ENCODE measurements at regions of chr22 and their contacts with region 1.

Region 1: DNA sequence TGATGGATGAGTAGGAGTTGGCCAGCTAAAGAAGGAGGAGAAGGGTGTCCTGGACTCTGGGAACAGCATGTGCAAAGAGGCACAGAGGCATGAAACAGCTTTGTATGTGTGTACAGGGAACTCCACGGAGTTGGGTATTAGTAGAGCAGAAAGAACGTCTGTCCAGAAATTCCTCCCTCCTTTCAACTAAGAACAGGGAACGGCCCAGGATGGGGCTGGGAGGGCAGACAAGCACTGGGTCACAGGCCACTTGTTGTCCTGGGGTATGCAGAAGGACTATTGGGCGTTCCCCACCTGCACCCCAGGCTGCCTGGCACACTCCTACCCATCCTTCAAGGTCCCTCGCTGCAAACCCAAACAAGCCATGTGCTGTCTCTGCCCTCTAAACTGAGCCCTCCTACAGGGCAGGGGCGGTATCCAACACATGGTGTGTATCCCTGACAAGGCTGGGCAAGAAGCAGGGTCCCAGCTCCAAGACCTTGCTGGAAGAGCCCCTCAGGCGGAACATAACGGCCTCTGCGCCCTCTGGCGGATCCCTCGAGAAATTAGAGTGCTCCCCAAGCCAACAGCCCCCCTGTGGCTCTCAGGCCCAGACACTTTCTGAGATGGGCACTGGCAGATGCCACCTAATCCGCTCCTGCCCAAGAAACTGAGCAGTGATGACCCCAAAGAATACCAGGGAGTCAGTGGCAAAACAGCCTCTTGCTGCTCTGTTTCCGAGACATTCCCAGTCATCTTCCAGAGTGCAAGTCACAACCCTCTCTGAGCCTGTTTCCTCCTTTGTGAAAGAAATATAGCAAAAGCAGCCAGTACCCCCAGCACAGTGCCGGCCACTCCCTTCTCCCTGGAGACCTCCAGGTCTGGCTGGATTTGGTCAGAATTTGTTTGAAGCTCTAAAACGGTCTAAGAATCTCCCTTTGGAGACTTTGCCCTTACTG is 1.6 kb upstream of the ELFN2 start:
- DNase-seq: peak; percentile 26
- H3K4me3 Mint-ChIP-seq: no peak overlapping the region
- H3K27ac Mint-ChIP-seq: no peak overlapping the region
- H3K4me1 Mint-ChIP-seq: peaks cover 14% of the 10 kb centered on the region
- H3K27me3 Mint-ChIP-seq: peaks cover 57% of the 10 kb centered on the region

Region 2: DNA sequence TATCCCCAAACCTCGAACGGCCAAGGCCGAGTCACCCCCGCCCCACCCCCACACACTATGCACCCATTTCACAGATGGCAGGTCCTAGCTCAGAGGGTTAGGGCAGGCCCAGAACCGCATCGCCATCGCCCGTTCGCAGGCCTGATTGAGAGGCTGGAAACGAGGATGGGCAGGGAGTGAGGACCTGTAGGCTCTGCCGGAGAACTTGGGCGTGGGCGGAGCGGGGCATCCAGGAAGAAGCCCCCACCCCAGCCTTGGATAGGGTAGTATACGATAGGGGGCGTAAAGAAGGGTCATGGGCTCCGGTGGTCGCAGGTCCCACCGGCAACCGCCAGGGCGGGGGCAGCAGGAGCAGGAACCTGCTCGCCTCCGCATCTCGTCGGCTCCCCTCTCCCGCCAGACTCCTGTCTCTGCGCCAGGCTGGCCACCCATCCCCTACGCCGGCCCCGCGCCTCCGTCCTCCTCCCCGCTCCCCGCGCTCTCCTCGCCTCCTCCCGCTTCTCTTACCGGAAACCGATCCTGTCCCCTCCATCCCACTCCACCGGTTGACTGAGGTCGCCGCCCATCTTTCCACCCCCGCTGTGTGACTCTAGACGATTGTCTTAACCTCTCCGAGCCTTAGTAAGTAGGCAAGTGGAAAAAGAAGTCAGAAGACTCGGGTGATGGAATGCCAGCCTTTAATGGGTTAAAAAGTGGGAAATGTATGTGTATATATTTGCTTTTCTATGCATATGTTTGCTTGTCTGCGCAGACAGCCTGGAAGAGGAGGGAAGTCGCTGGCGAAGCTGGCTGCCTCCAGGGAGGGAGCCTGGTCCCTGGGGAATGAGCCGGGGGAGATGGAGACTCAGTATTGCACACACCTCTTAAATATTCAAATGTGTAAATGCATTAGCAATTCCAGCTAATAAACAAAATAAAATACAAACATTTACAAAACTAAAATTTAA is 93.8 kb before region 1 on chr22:
- intact Hi-C with region 1: loop called (anchors 5 kb)
- DNase-seq: no peak
- H3K4me3 Mint-ChIP-seq: no peak overlapping the region
- H3K27ac Mint-ChIP-seq: no peak overlapping the region
- H3K4me1 Mint-ChIP-seq: peaks cover 6% of the 10 kb centered on the region
- H3K27me3 Mint-ChIP-seq: peaks cover 56% of the 10 kb centered on the region

Region 3: DNA sequence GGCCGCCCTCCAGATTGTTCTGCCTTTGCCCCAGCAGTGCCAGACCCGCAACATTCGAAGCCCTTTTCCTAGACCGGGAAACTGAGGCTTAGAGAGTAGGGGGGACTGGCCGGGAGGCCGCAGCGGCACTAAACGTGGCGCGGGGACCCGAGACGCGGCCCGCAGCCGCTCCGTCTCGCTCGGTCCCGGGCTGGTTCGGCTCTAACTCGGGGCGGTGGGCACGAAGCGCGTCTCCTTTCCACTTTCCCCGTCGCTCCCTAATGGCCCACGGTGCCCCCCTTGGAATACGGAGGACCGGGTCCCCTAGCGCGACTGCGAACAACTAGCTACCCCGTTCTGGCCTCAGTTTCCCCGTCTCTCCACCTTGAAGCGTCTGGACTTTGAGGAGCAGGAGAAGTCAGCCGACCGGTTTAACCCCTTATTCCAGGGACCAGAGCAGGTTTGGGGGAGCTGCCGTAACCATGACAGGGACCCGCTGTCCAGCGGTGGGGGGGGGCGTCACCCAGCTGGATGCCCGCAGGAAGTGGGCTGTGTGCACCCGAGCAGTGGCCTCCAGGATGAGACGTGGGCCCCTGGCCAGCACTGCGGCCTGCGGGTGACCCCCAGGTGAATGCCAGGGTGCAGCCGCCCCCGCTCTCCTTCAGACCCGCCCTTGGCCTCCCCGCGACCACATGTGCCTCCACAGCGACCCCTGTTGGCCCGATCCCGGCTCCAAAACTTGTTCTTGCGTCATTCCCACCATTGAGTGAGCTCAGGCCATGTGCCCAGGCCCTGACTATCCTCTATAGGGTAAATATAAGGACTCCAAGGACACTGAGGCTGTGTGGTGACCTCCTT is 132.5 kb after region 1 on chr22:
- intact Hi-C with region 1: no loop called
- DNase-seq: peak; percentile 62
- H3K4me3 Mint-ChIP-seq: peak overlapping the region; percentile 58
- H3K27ac Mint-ChIP-seq: peak overlapping the region; percentile 14
- H3K4me1 Mint-ChIP-seq: peaks cover 9% of the 10 kb centered on the region
- H3K27me3 Mint-ChIP-seq: peaks cover 57% of the 10 kb centered on the region

Region 4: GRCh38 chr22:37972527-37972926 is 543.6 kb after region 1 on chr22:
- intact Hi-C with region 1: no loop called
- DNase-seq: no peak
- H3K4me3 Mint-ChIP-seq: no peak overlapping the region
- H3K27ac Mint-ChIP-seq: no peak overlapping the region
- H3K4me1 Mint-ChIP-seq: no peaks in the 10 kb centered on the region
- H3K27me3 Mint-ChIP-seq: no peaks in the 10 kb centered on the region

Measured in activated T-helper 2 cell treated with anti-CD3 and anti-CD28 coated beads, Interferon-gamma antibody, Interleukin-2, Interleukin-4, amounts not matched to agents 10 μg/mL and 5 μg/mL and 100 μg/mL, durations not matched to agents 14 hours and 24 hours and 36 hours (primary cell).